Naive thymus-derived CD8-positive, alpha-beta T cell (primary cell): ENCODE measurements at regions of chr17 and their contacts with region 1.

Region 1: GRCh38 chr17:76079956-76080767 is 1.2 kb downstream of the ZACN start:
- DNase-seq: no peak
- ATAC-seq: peak; percentile 17 to 24
- H3K4me3 Mint-ChIP-seq: peak overlapping the region in 2 of 10 donors; percentile 19 to 40
- H3K27ac Mint-ChIP-seq: peak overlapping the region; percentile 27 to 87 (median 68)
- H3K4me1 Mint-ChIP-seq: peaks cover 19 to 53% (median 46%) of the 10 kb centered on the region in 4 donors
- H3K27me3 Mint-ChIP-seq: peaks cover 4 to 20% (median 13%) of the 10 kb centered on the region in 5 donors

Region 2: GRCh38 chr17:76022285-76022684 is 57.9 kb before region 1 on chr17:
- POLR2A ChIA-PET with region 1: interaction called, 11 read pairs
- DNase-seq: no peak
- ATAC-seq: no peak
- H3K4me3 Mint-ChIP-seq: peak overlapping the region in 1 of 10 donors; percentile 27
- H3K27ac Mint-ChIP-seq: peak overlapping the region in 2 of 10 donors; percentile 69 to 76
- H3K4me1 Mint-ChIP-seq: peaks cover 10 to 37% (median 23%) of the 10 kb centered on the region in 4 donors
- H3K27me3 Mint-ChIP-seq: no peaks in the 10 kb centered on the region

Region 3: GRCh38 chr17:76103274-76104139 is 23.3 kb after region 1 on chr17 and contains the start of gene EXOC7:
- POLR2A ChIA-PET with region 1: interaction called, 15 read pairs
- DNase-seq: peak; percentile 87 to 95 (median 92)
- ATAC-seq: peak; percentile 90 to 92
- H3K4me3 Mint-ChIP-seq: peak within 1 kb of the TSS; percentile 94 to 99 (median 97)
- H3K27ac Mint-ChIP-seq: peak within 1 kb of the TSS; percentile 95 to 99 (median 98)
- H3K4me1 Mint-ChIP-seq: peaks cover 6 to 39% (median 36%) of the 10 kb centered on the region in 4 donors
- H3K27me3 Mint-ChIP-seq: no peaks in the 10 kb centered on the region
- polyA plus RNA-seq, gene EXOC7: 46.0 to 62.6 (median 49.0) TPM

Region 4: GRCh38 chr17:76130473-76130872 is 50.3 kb after region 1 on chr17:
- POLR2A ChIA-PET with region 1: no interaction called
- DNase-seq: no peak
- ATAC-seq: no peak
- H3K4me3 Mint-ChIP-seq: no peak overlapping the region
- H3K27ac Mint-ChIP-seq: peak overlapping the region in 3 of 10 donors; percentile 38 to 84 (median 53)
- H3K4me1 Mint-ChIP-seq: peaks cover 29 to 54% (median 37%) of the 10 kb centered on the region in 4 donors
- H3K27me3 Mint-ChIP-seq: no peaks in the 10 kb centered on the region

Region 5: GRCh38 chr17:76204277-76204676 is 124.1 kb after region 1 on chr17:
- POLR2A ChIA-PET with region 1: no interaction called
- DNase-seq: no peak
- ATAC-seq: no peak
- H3K4me3 Mint-ChIP-seq: no peak overlapping the region
- H3K27ac Mint-ChIP-seq: peak overlapping the region; percentile 17 to 82 (median 52)
- H3K4me1 Mint-ChIP-seq: peaks cover 20 to 67% (median 64%) of the 10 kb centered on the region in 4 donors
- H3K27me3 Mint-ChIP-seq: no peaks in the 10 kb centered on the region